ENCODE measurements at regions of chr14 and their contacts with region 1.

Region 1: GRCh38 chr14:95361373-95362137 is 41.8 kb upstream of the CLMN start:
- DNase-seq: peak; percentile 81
- ATAC-seq: peak; percentile 94
- H3K4me3 Mint-ChIP-seq: peak overlapping the region; percentile 72
- H3K27ac Mint-ChIP-seq: peak overlapping the region; percentile 97
- H3K4me1 Mint-ChIP-seq: peaks cover 37% of the 10 kb centered on the region
- H3K27me3 Mint-ChIP-seq: peaks cover 15% of the 10 kb centered on the region
- CTCF ChIP-seq: peak; percentile 87

Region 2: DNA sequence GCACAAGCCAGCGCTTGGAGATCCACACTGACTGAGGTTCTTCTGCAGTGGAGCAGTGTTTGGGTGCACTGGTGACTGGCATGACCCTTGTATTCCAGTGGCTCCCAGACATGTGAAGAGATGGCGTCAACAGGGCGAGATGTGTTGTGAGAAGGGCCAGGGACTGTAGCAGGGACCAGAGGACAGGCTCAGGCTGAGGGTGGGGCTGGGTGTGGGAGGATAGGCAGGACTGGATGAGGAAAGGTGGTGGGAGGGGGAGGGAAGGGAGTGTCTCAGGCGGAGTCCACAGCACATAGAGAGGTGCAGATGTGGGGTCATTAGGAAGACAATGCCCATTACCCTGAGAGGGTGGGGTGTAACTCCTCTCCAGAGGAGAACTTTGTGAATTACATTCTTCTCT is 282.7 kb before region 1 on chr14:
- CTCF ChIA-PET with region 1: no interaction called
- POLR2A ChIA-PET with region 1: no interaction called
- DNase-seq: peak; percentile 27
- ATAC-seq: peak; percentile 92
- H3K4me3 Mint-ChIP-seq: no peak overlapping the region
- H3K27ac Mint-ChIP-seq: no peak overlapping the region
- H3K4me1 Mint-ChIP-seq: peaks cover 11% of the 10 kb centered on the region
- H3K27me3 Mint-ChIP-seq: no peaks in the 10 kb centered on the region; the same call in 1 of the 2 replicates
- CTCF ChIP-seq: no peak

Region 3: DNA sequence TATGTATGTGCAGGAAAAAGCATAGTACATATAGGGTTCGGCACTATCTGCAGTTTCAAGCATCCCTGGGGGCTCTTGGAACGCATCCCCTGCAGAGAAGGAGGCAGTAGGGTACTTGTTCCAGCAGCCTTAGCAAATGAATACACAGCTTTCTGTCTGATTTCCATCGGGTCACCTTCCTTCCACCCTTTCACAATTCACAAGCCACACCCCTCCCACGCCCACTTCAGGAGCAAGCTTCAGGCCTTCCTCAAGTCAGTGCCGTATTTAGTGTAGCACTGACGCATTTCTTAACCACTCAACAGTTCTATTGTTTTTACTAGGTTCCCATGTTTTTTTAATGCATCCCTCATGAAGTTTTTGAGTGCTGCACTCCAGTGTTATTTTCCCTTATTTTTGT is 106.1 kb before region 1 on chr14:
- CTCF ChIA-PET with region 1: interaction called, 14 read pairs
- POLR2A ChIA-PET with region 1: no interaction called
- DNase-seq: peak; percentile 80
- ATAC-seq: peak; percentile 90
- H3K4me3 Mint-ChIP-seq: no peak overlapping the region; the same call in 1 of the 2 replicates
- H3K27ac Mint-ChIP-seq: peak overlapping the region; percentile 84
- H3K4me1 Mint-ChIP-seq: peaks cover 32% of the 10 kb centered on the region
- H3K27me3 Mint-ChIP-seq: no peaks in the 10 kb centered on the region; the same call in 1 of the 2 replicates
- CTCF ChIP-seq: no peak

Region 4: GRCh38 chr14:95319312-95320021 is 42.1 kb before region 1 on chr14 and contains the start of gene CLMN:
- CTCF ChIA-PET with region 1: interaction called, 10 read pairs
- POLR2A ChIA-PET with region 1: no interaction called
- DNase-seq: peak; percentile 59
- ATAC-seq: peak; percentile 55
- H3K4me3 Mint-ChIP-seq: peak within 1 kb of the TSS; percentile 79
- H3K27ac Mint-ChIP-seq: no peak within 1 kb of the TSS
- H3K4me1 Mint-ChIP-seq: peaks cover 19% of the 10 kb centered on the region
- H3K27me3 Mint-ChIP-seq: peaks cover 38% of the 10 kb centered on the region
- CTCF ChIP-seq: no peak
- total RNA-seq, gene CLMN: 10.4 to 12.2 TPM (median 10.8 TPM) in 3 replicates

Region 5: DNA sequence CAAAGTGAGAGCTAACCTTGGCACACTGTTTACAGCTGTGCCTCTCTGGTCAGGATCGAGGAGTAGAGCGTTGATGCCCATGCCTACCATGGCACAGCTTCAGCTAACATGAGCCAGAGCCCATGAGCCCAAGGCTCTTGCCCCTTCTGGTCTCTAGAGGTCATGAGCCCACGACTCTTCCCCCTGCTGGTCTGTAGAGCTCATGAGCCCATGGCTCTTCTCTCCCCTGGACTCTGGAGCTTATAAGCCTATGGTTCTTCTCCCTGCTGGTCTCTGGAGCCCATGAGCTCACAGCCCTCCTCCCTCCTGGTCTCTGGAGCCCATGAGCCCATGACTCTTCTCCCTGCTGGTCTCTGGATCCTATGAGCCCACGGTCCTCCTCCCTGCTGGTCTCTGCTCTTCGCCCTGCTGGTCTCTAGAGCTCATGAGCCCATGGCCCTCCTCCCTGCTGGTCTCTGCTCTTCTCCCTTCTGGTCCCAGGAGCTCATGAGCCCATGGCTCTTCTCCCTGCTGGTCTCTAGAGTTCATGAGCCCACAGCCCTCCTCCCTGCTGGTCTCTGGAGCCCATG is 25.3 kb before region 1 on chr14:
- CTCF ChIA-PET with region 1: interaction called, 13 read pairs
- POLR2A ChIA-PET with region 1: no interaction called
- DNase-seq: no peak
- ATAC-seq: no peak; the same call in 1 of the 2 replicates
- H3K4me3 Mint-ChIP-seq: no peak overlapping the region
- H3K27ac Mint-ChIP-seq: no peak overlapping the region
- H3K4me1 Mint-ChIP-seq: 0 out of 2 replicates have a peak, but pooled peaks cover 3% of the 10 kb centered on the region
- H3K27me3 Mint-ChIP-seq: peaks cover 2% of the 10 kb centered on the region; the same call in 1 of the 2 replicates
- CTCF ChIP-seq: no peak

Region 6: DNA sequence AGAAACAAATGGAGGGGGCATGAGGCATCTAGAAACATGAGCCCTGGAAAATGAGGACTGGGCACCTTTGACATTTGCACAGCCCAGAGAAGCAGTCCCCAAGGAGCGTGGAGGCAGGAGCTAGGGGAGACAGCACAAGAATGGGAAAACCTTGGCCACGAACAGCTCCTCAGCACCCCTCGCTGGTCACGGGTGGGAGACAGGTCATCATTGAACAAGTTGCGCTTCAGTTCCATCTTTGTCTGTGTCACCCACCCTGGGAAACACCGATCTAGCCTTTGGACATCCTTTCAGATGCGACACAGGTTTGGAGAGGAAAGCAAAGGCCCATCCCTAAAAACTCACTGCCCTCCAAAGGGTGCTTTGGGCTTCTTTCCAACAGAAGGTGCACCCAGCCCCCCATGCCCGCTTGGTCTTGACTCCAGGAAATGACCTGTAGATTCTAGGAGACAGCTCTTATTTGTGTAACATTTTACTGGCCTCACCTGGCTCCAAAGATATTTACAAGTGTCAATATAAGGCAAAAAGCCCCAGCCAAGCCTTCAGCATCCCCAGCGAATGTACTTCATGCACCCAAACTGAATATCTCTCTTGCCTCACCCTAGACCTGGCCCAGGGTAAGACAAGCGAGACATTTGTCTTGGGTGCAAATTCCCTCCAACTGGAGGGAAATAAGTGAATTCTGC is 13.0 kb before region 1 on chr14:
- CTCF ChIA-PET with region 1: interaction called, 35 read pairs
- POLR2A ChIA-PET with region 1: interaction called, 3 read pairs
- DNase-seq: peak; percentile 32
- ATAC-seq: peak; percentile 78
- H3K4me3 Mint-ChIP-seq: no peak overlapping the region
- H3K27ac Mint-ChIP-seq: no peak overlapping the region
- H3K4me1 Mint-ChIP-seq: no peaks in the 10 kb centered on the region; the same call in 1 of the 2 replicates
- H3K27me3 Mint-ChIP-seq: no peaks in the 10 kb centered on the region
- CTCF ChIP-seq: no peak

Region 7: DNA sequence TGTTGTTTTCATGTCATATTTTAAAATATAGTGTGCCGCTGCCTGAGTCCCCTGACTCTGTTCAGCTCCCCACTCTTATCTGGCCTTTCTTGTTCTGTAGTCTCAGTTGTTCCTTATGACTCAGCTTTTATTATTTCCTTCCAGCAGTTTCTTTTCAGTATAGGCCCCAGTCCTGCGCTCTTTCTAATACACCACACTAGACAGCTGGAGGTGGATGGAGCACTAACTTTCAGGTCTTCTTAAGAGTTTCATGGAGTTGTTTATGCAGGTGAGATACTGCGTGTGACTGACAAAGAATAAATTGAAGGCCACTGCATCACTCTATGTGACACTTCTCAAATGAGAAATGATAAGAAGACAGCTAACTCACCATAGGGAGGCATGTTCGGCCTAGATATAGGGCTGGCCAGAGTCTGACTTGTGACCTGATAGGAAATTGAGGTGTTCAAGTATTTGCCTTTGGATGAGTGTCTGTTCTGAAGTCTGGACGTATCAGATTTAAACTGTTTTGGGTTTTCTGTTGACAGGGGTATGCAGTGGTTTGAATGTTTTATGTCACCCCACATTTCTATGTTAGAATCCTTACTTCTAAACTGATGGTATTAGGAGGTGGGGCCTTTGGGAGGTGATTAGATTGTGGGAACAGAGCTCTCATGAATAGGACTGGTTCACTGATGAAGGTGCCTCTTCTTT is 18.9 kb after region 1 on chr14:
- CTCF ChIA-PET with region 1: interaction called, 12 read pairs
- POLR2A ChIA-PET with region 1: no interaction called
- DNase-seq: no peak
- ATAC-seq: no peak
- H3K4me3 Mint-ChIP-seq: no peak overlapping the region
- H3K27ac Mint-ChIP-seq: no peak overlapping the region
- H3K4me1 Mint-ChIP-seq: peaks cover 3% of the 10 kb centered on the region
- H3K27me3 Mint-ChIP-seq: peaks cover 7% of the 10 kb centered on the region
- CTCF ChIP-seq: no peak

Region 8: DNA sequence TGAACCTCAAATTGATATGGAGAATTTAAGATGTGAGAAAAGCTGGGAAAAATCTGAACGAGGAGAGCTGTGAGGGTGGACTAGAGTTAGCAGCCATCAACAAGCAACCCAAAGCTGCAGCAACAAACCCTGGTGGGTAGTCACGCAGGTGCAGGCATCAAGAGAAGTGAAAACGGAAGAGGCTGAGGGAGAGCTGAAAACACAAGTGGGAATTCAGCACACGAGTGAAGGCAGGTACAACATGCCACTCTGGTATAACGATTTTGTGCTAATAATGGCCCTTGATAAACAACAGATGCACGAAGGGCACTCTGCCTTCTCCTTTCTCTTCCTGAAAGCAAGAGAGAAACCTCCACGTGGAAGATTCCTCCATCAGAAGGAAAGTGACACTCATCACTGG is 336.2 kb after region 1 on chr14:
- CTCF ChIA-PET with region 1: no interaction called
- POLR2A ChIA-PET with region 1: no interaction called
- DNase-seq: no peak
- ATAC-seq: no peak
- H3K4me3 Mint-ChIP-seq: no peak overlapping the region
- H3K27ac Mint-ChIP-seq: no peak overlapping the region
- H3K4me1 Mint-ChIP-seq: peaks cover 47% of the 10 kb centered on the region
- H3K27me3 Mint-ChIP-seq: peaks cover 92% of the 10 kb centered on the region
- CTCF ChIP-seq: no peak